Tibial artery (tissue), 4 donors: ENCODE measurements at regions of chr2 and their contacts with region 1.

Region 1: GRCh38 chr2:191566344-191566743 is 111.6 kb upstream of the NABP1 start:
- DNase-seq: peak in 1 of 2 donors; percentile 60
- H3K4me3 ChIP-seq: no peak overlapping the region
- H3K27ac ChIP-seq: no peak overlapping the region
- H3K4me1 ChIP-seq: no peaks in the 10 kb centered on the region
- H3K27me3 ChIP-seq: no peaks in the 10 kb centered on the region
- CTCF ChIP-seq: peak; percentile 59 to 68

Region 2: GRCh38 chr2:191691016-191691735 is 124.8 kb after region 1 on chr2:
- intact Hi-C with region 1: loop called (anchors 5 kb)
- DNase-seq: peak in 1 of 2 donors; percentile 44
- H3K4me3 ChIP-seq: no peak overlapping the region
- H3K27ac ChIP-seq: no peak overlapping the region
- H3K4me1 ChIP-seq: peaks cover 0 to 33% (median 8%) of the 10 kb centered on the region in 4 donors
- H3K27me3 ChIP-seq: no peaks in the 10 kb centered on the region
- CTCF ChIP-seq: peak; percentile 69 to 77

Region 3: DNA sequence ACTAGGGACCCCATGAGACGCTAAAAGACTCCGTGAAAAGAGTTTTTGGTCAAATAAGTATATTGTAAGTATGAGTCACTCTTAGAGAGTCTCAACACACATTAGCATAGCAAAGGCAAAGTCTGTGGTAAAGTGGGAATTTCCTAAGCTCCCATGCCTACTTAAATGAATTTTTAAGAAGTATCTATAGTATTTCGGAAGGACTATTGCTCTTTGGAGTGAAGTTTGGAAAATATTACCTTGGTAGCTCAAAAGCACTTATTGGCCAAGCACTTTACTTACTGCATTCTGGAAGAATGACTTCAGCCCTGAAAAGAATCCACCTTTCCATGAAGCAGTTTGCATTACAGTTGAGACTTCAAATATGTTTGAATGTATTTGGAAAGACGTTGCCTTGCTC is 223.5 kb after region 1 on chr2:
- intact Hi-C with region 1: loop called (anchors 10 kb)
- DNase-seq: no peak
- H3K4me3 ChIP-seq: no peak overlapping the region
- H3K27ac ChIP-seq: no peak overlapping the region
- H3K4me1 ChIP-seq: no peaks in the 10 kb centered on the region
- H3K27me3 ChIP-seq: no peaks in the 10 kb centered on the region
- CTCF ChIP-seq: no peak